ENCODE measurements at regions of chr21 and their contacts with region 1.

Region 1: DNA sequence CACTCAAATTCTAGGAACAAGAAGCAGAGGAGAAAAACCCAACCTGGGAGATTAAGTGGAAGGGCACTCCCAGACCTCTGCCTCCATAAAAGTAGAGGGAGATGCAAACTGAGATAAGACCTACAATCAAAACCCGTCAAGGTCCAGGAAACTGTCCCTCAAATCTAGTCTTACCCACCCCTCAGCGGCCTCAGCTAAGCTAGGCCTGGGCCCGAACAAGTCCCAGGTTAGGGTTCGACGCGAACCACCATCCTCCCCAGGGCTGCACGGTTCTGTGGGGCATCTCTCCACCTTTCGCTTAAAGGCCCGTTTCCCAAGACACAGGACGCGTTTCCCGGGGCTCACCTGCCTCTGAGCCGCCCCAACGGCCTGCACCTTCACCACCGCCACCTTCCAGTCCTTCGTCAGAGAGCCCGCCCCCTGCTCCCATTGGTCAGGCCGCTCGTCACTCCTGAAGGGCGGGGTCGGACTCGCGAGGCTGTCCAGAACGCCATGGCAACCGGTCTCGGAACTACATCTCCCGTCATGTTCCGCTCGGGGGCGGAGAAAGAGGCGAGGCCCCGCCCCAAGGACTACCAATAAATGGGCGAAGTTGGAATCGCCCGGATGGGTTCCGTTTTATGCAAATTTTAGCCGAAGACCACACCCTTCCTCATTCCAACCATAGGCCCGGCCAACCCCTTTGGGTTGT is at the start of gene CRYZL1:
- DNase-seq: peak; percentile 100
- total RNA-seq, gene CRYZL1: 38.7 to 40.4 TPM

Region 2: DNA sequence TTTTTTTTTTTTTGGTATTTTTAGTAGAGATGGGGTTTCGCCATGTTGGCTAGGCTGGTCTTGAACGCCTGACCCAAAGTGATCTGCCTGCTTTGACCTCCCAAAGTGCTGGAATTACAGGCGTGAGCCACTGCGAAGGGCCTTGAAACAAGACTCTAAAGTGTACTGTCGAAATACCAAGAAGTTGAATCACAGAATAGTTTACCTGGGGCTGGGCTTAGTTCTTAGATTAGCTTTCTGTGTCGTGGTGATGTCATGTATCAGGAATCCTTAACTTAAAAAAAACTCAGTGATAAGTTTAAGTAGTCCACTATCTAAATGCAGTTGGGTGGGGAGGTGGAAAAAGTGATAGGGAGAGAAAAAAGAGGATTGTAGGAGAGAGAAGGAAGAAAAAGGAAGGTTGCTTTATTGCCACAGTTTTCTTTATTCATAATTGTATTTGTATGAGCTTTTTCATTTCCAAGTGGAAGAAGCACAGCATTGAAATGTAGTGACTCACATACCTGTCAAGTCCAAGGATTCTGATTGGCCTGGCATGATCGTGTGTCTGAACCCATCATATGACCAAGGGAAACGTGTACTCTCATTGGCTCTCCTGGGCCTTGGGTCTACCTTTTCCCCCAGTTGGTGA is 14.2 kb after region 1 on chr21:
- intact Hi-C with region 1: loop called in 1 of 2 experiments (anchors 1 kb)
- DNase-seq: no peak

Region 3: DNA sequence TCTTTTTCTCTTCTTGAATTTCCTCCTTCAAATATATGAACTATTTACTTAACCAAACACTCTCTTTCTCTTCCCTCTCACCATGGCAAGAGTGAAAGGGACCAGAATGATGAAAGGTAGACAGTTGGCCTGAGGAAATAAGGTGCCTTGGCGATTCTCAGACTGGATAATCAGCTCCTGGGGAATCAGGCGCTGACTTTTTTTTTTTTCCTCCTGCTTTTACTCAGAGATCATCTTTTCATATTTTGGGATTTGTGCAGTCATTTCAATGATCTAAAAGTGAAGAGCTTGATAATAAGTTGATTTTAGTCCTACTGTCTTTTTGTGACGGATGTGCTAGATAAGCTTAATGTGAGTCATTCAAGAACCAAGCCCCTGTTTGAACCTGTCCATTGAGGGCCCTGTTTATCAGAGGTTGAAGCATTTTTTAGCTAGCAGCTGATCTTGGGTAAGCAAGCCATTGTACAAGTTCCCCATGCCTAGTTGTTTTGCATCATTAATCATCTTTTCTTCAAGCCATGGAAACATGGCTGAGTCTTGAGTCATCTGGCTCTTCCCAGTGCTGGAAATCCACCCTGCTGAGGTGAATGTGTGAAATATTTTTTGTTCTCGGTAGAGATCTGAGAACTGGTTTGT is 41.6 kb after region 1 on chr21:
- intact Hi-C with region 1: no loop called
- DNase-seq: no peak

Region 4: DNA sequence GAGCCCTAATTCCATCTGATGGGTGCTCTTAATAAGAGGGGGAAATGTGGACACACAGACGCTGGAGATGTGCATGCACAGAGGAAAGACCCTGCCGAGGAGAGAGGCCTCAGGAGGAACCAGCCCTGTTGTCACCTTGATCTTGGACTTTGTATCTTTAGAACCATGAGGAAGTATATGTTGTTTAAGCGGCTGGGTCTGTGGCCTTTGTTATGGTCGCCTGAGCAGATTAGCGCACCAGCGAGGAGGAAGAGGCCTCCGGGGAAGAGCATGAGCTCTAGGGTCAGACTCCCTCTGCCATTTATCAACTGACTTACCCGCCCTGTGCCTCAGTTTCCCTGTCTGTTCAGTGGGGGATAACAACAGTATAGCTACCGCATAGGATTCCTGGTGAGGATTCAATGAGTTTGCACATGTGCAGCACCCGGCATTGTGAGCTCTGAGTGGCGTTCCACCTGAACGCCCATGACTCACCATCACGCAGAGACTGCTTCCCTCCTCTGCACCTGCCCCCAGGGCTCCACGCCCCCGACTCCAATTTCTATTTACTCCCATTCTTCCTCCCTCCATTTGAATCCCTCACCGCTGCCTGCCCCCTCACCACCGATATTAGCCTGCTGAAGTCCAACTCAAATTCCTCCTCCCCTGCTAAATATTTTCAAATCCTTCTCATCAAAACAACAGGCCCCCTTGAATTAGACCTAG is 206.9 kb after region 1 on chr21:
- intact Hi-C with region 1: no loop called
- DNase-seq: peak; percentile 55

Region 5: DNA sequence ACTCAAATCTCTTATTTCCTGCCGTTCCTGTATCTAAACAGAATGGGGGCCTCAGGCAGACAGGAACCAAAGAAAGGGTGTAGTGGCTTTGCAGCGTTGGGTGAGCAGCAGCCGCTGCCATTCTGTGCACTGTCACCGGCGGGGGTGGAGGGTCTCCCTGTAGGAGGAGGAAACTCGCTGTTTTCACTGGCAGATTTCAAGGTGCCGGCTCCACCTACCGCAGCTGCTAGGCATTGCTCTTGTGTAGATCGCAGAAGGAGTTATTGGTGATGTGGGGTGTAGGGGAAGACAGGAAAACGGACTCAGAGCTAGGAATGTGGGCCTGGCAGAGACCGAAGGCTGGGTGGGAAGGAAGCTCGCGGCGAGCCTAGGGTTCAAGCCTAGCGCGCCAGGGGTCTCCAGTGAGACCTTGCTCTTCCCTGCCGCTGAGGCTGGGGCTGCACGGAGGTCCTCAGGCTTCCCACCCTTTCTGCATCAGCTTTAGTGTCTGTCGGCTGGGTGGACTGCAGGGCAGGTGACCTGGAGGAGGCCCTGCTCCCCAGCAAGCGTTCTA is 253.3 kb after region 1 on chr21:
- intact Hi-C with region 1: loop called (anchors 10 kb)
- DNase-seq: peak; percentile 94

Region 6: GRCh38 chr21:33901412-33902288 is 260.2 kb after region 1 on chr21:
- intact Hi-C with region 1: loop called (anchors 10 kb)
- DNase-seq: no peak

Measured in posterior vena cava (tissue), 2 donors.